Naive thymus-derived CD4-positive, alpha-beta T cell (primary cell): ENCODE measurements at regions of chr20 and their contacts with region 1.

Region 1: GRCh38 chr20:32945710-32946221 is 58.5 kb downstream of the SUN5 start:
- DNase-seq: peak in 7 of 9 donors; percentile 22 to 67 (median 57)
- ATAC-seq: peak; percentile 93
- H3K4me3 ChIP-seq: peak overlapping the region; percentile 25
- H3K4me3 Mint-ChIP-seq: peak overlapping the region; percentile 34 to 85 (median 68)
- H3K27ac ChIP-seq: peak overlapping the region; percentile 57
- H3K27ac Mint-ChIP-seq: peak overlapping the region; percentile 79 to 96 (median 88)
- H3K4me1 ChIP-seq: peaks cover 8 to 33% of the 10 kb centered on the region in 2 donors
- H3K4me1 Mint-ChIP-seq: peaks cover 30 to 53% (median 48%) of the 10 kb centered on the region in 7 donors
- H3K27me3 ChIP-seq: no peaks in the 10 kb centered on the region
- H3K27me3 Mint-ChIP-seq: no peaks in the 10 kb centered on the region

Region 2: GRCh38 chr20:32674362-32674789 is 271.4 kb before region 1 on chr20:
- CTCF ChIA-PET with region 1: no interaction called
- POLR2A ChIA-PET with region 1: no interaction called
- intact Hi-C with region 1: loop called in 1 of 2 experiments (anchors 1 kb)
- DNase-seq: peak; percentile 37 to 74 (median 65)
- ATAC-seq: peak; percentile 68
- H3K4me3 ChIP-seq: no peak overlapping the region
- H3K4me3 Mint-ChIP-seq: peak overlapping the region in 2 of 10 donors; percentile 21 to 38
- H3K27ac ChIP-seq: no peak overlapping the region
- H3K27ac Mint-ChIP-seq: peak overlapping the region in 3 of 9 donors; percentile 15 to 42 (median 29)
- H3K4me1 ChIP-seq: peaks cover 9 to 14% of the 10 kb centered on the region in 2 donors
- H3K4me1 Mint-ChIP-seq: peaks cover 6 to 40% (median 29%) of the 10 kb centered on the region in 7 donors
- H3K27me3 ChIP-seq: no peaks in the 10 kb centered on the region
- H3K27me3 Mint-ChIP-seq: peaks cover 0 to 5% (median 0%) of the 10 kb centered on the region in 5 donors

Region 3: GRCh38 chr20:32959351-32960221 is 13.8 kb after region 1 on chr20:
- CTCF ChIA-PET with region 1: interaction called, 6 read pairs
- POLR2A ChIA-PET with region 1: interaction called, 11 read pairs
- intact Hi-C with region 1: no loop called
- DNase-seq: no peak
- ATAC-seq: no peak
- H3K4me3 ChIP-seq: no peak overlapping the region
- H3K4me3 Mint-ChIP-seq: no peak overlapping the region
- H3K27ac ChIP-seq: no peak overlapping the region
- H3K27ac Mint-ChIP-seq: peak overlapping the region in 2 of 9 donors; percentile 2 to 43
- H3K4me1 ChIP-seq: peaks cover 0 to 13% of the 10 kb centered on the region in 2 donors
- H3K4me1 Mint-ChIP-seq: peaks cover 16 to 43% (median 37%) of the 10 kb centered on the region in 7 donors
- H3K27me3 ChIP-seq: no peaks in the 10 kb centered on the region
- H3K27me3 Mint-ChIP-seq: no peaks in the 10 kb centered on the region

Region 4: GRCh38 chr20:32972181-32973076 is 26.7 kb after region 1 on chr20:
- CTCF ChIA-PET with region 1: interaction called, 25 read pairs
- POLR2A ChIA-PET with region 1: interaction called, 40 read pairs
- intact Hi-C with region 1: loop called in 1 of 2 experiments (anchors 1 kb)
- DNase-seq: peak; percentile 31 to 96 (median 94)
- ATAC-seq: peak; percentile 90
- H3K4me3 ChIP-seq: peak overlapping the region; percentile 53
- H3K4me3 Mint-ChIP-seq: peak overlapping the region in 1 of 10 donors; percentile 54
- H3K27ac ChIP-seq: peak overlapping the region; percentile 85
- H3K27ac Mint-ChIP-seq: no peak overlapping the region
- H3K4me1 ChIP-seq: peaks cover 73 to 92% of the 10 kb centered on the region in 2 donors
- H3K4me1 Mint-ChIP-seq: peaks cover 13 to 56% (median 46%) of the 10 kb centered on the region in 7 donors
- H3K27me3 ChIP-seq: no peaks in the 10 kb centered on the region
- H3K27me3 Mint-ChIP-seq: no peaks in the 10 kb centered on the region

Region 5: GRCh38 chr20:33005132-33005566 is 59.4 kb after region 1 on chr20:
- CTCF ChIA-PET with region 1: interaction called, 3 read pairs
- POLR2A ChIA-PET with region 1: interaction called, 3 read pairs
- intact Hi-C with region 1: loop called in 1 of 2 experiments (anchors 1 kb)
- DNase-seq: peak in 6 of 9 donors; percentile 7 to 41 (median 35)
- ATAC-seq: no peak
- H3K4me3 ChIP-seq: no peak overlapping the region
- H3K4me3 Mint-ChIP-seq: peak overlapping the region in 1 of 10 donors; percentile 38
- H3K27ac ChIP-seq: no peak overlapping the region
- H3K27ac Mint-ChIP-seq: peak overlapping the region in 2 of 9 donors; percentile 42 to 63
- H3K4me1 ChIP-seq: peaks cover 0 to 20% of the 10 kb centered on the region in 2 donors
- H3K4me1 Mint-ChIP-seq: peaks cover 3 to 56% (median 34%) of the 10 kb centered on the region in 7 donors
- H3K27me3 ChIP-seq: no peaks in the 10 kb centered on the region
- H3K27me3 Mint-ChIP-seq: no peaks in the 10 kb centered on the region